IMR-90 (cell line): ENCODE measurements at regions of chr10 and their contacts with region 1.

Region 1: DNA sequence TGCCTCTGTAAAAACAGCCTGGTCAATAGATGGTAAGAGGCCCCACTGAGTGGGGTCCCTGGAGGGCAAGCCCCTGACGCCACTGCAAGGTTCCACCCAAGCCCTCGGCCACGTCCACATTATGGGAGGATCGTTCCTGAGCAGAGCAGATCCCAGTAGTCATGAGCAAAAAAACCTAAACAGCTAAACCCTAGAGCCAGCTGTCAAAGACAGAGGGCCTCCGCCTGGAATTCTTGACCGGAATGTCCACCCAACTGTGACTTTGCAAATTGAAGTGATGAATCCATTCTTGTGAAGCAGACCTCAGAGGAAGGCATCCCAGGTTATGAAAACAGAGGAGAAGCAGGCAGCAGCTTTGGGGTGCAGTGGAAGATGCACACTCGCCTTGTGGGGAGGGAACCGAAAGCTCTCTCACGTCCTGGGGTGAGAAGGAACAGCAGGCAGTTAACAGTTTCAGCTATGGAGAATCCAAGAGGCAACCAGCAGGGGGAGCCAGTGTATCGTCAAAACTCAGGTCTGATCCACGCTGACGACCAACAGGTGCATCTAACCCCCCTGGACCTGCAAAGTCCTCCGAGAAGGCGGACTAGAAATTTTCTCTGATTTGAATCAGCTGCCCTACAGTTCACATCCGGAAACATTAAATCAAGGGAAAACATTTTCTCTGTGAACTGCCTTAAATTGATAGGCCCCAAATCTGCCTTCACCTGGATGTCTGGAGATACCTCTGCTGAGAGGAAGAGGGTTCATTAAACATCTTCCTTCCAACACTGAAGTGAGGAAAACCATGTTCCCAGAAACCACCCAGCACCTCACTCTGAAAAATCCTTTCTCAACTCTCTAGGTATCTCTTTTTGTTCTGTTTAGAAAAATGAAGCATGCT is 139.1 kb upstream of the PFKP start:
- DNase-seq: peak; percentile 64
- ATAC-seq: peak; percentile 90
- H3K4me3 ChIP-seq: no peak overlapping the region
- H3K27ac ChIP-seq: no peak overlapping the region
- H3K4me1 ChIP-seq: 0 out of 2 replicates have a peak, but pooled peaks cover 1% of the 10 kb centered on the region
- H3K27me3 ChIP-seq: peaks cover 2% of the 10 kb centered on the region; the same call in 1 of the 2 replicates
- CTCF ChIP-seq: peak; percentile 83
- POLR2A ChIP-seq: no peak
- RAD21 ChIP-seq: peak; percentile 86

Region 2: GRCh38 chr10:1109795-1110673 is 1818.2 kb before region 1 on chr10:
- CTCF ChIA-PET with region 1: no interaction called
- POLR2A ChIA-PET with region 1: no interaction called
- dilution Hi-C with region 1: no loop called
- in situ Hi-C with region 1: no loop called
- intact Hi-C with region 1: loop called (anchors 10 kb)
- DNase-seq: peak; percentile 87
- ATAC-seq: peak; percentile 90
- H3K4me3 ChIP-seq: no peak overlapping the region
- H3K27ac ChIP-seq: peak overlapping the region; percentile 53
- H3K4me1 ChIP-seq: peaks cover 9% of the 10 kb centered on the region
- H3K27me3 ChIP-seq: no peaks in the 10 kb centered on the region
- CTCF ChIP-seq: peak; percentile 61
- POLR2A ChIP-seq: no peak
- RAD21 ChIP-seq: peak; percentile 59

Region 3: DNA sequence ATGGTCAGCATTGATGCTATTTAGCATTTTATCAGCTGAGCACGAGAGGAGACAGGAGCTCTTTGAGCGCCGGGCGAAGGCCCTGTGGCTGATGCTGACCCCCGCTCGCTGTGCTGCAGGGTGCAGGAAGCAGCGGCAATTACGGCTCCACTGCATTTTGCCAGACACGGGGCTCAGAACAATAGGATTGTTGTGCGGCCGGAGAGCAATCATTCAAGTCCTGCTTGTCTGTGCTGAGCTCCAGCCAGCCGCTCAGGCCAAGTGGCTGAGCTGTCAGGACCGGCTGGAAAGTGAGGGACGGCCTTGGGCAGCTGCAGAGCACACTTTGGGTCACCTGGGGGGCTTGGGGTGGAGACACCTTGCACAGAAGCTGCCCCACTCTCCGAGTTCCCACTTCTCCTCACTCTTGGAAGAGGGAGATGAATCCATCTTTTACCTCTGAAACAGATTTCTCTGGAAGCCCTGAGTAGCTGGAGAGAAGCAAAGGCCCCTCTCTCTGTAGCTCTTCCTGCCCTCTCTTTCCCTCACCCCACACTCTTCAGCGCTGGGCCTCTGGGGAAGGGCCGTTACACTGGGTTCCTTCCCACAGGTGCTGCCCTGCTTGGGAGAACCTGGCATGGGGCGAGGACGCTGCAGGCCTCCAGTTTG is 1173.6 kb before region 1 on chr10:
- CTCF ChIA-PET with region 1: no interaction called
- POLR2A ChIA-PET with region 1: no interaction called
- dilution Hi-C with region 1: no loop called
- in situ Hi-C with region 1: no loop called
- intact Hi-C with region 1: no loop called
- DNase-seq: no peak
- ATAC-seq: no peak
- H3K4me3 ChIP-seq: no peak overlapping the region
- H3K27ac ChIP-seq: no peak overlapping the region
- H3K4me1 ChIP-seq: no peaks in the 10 kb centered on the region
- H3K27me3 ChIP-seq: no peaks in the 10 kb centered on the region
- CTCF ChIP-seq: no peak
- POLR2A ChIP-seq: no peak
- RAD21 ChIP-seq: no peak

Region 4: GRCh38 chr10:2968401-2969058 is 40.3 kb after region 1 on chr10:
- CTCF ChIA-PET with region 1: interaction called, 3 read pairs
- POLR2A ChIA-PET with region 1: interaction called, 19 read pairs
- dilution Hi-C with region 1: no loop called
- in situ Hi-C with region 1: no loop called
- intact Hi-C with region 1: no loop called
- DNase-seq: peak; percentile 67
- ATAC-seq: peak; percentile 63
- H3K4me3 ChIP-seq: no peak overlapping the region
- H3K27ac ChIP-seq: no peak overlapping the region
- H3K4me1 ChIP-seq: peaks cover 3% of the 10 kb centered on the region; the same call in 1 of the 2 replicates
- H3K27me3 ChIP-seq: 0 out of 2 replicates have a peak, but pooled peaks cover 1% of the 10 kb centered on the region
- CTCF ChIP-seq: no peak
- POLR2A ChIP-seq: no peak
- RAD21 ChIP-seq: no peak

Region 5: DNA sequence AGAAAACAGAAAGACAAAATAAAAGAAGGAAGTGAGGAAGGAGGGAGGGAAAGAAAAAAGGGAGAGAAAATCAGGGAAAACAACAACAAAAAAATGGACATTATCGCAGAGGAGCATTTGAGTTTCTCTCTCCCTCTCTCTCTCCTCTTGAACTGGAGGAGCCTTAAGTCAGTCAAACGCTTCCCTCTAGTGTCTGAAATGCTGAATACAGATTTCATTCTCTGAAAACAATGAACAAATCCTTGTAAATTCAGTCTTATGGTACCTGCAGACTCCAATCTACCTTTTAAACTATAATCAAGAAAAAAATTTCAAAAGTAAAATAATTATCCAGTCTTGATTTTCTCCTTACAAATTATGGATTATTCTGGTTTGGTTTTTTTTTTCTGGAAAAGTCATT is 49.9 kb after region 1 on chr10:
- CTCF ChIA-PET with region 1: interaction called, 6 read pairs
- POLR2A ChIA-PET with region 1: no interaction called
- dilution Hi-C with region 1: no loop called
- in situ Hi-C with region 1: no loop called
- intact Hi-C with region 1: loop called (anchors 1 kb)
- DNase-seq: peak; percentile 79
- ATAC-seq: peak; percentile 62
- H3K4me3 ChIP-seq: no peak overlapping the region
- H3K27ac ChIP-seq: no peak overlapping the region
- H3K4me1 ChIP-seq: peaks cover 8% of the 10 kb centered on the region
- H3K27me3 ChIP-seq: no peaks in the 10 kb centered on the region
- CTCF ChIP-seq: peak; percentile 82
- POLR2A ChIP-seq: no peak
- RAD21 ChIP-seq: peak; percentile 83

Region 6: DNA sequence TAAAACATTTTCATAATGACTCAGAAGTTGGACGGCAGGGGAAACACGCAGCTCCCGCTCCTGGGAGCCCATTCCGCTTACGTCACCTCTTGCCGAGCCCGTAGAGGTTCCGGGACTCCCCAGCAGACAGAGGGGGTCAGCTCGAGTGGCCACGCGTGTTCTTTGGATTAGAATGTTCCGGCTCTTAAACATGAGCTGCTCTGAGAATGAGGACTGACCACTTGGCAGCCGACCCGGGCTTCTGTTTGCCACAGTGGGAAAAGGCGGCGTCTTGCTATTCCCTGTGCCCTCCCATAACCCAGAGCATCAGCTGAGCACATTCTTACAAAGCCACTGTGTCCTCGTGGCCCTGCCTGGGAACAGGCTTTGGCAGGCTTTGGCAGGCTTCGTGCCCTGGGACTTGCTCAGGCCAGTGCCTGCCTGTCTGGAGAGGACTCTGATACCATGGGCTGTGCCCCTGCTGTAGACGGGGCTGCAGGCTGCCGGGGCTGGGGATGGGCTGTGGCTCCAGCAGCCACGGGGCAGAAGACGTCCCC is 179.3 kb after region 1 on chr10:
- CTCF ChIA-PET with region 1: no interaction called
- POLR2A ChIA-PET with region 1: no interaction called
- dilution Hi-C with region 1: no loop called
- in situ Hi-C with region 1: no loop called
- intact Hi-C with region 1: loop called (anchors 5 kb)
- DNase-seq: peak; percentile 98
- ATAC-seq: peak; percentile 90
- H3K4me3 ChIP-seq: no peak overlapping the region
- H3K27ac ChIP-seq: peak overlapping the region; percentile 77
- H3K4me1 ChIP-seq: peaks cover 11% of the 10 kb centered on the region
- H3K27me3 ChIP-seq: no peaks in the 10 kb centered on the region
- CTCF ChIP-seq: no peak
- POLR2A ChIP-seq: 0 out of 2 replicates have a peak, but pooled peaks have one; percentile 16
- RAD21 ChIP-seq: no peak